OCI-LY7 (cell line): ENCODE measurements at regions of chr2 and their contacts with region 1.

Region 1: DNA sequence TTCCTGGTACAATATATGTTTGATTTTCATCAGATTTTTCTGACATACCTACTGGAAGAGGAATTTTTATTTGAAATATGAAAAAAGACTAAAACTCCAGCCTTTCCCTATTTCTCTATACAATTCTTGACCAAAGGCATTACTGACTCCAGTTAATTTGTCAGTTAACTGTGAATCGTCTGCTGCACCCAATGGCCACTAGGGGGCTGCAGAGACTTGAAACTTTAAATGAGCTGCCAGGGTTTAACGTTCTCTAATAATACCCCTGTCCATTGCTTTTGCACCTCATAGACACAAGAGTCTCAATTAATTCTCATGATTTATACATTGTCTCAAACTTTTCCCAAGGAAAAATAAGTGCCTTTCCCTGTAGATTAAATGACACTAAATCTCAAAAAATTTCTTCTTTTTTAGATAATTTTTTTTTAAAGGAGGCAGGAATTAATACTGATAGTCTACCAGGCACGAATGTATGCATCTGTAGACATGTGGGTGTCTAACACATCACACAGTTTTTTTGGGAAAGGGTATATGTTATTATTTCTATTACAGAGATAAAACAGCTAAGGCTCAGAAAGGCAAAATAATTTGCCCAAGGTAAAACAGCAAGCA is 1.8 kb upstream of the ALK start:
- DNase-seq: peak; percentile 71
- H3K4me3 ChIP-seq: no peak overlapping the region
- H3K27ac ChIP-seq: no peak overlapping the region
- H3K4me1 ChIP-seq: no peaks in the 10 kb centered on the region
- CTCF ChIP-seq: peak; percentile 97

Region 2: DNA sequence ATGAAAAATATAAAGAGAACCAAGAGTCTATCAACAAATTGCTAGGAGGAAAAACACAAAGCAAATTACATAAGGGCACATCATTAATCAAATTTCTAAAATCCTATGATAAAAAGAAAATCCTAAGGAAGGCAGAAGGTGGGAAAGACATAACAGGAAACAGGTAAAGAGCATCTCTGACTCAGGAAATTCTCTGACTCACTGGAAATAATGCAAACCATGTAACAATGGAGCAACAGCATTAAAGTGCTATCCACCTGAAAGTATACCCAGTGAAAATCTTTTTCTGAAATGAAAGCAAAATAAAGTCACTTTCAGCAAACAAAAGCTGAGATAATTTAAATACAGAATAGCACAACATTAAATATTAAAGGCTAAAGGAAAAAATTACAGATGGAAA is 12.8 kb before region 1 on chr2:
- CTCF ChIA-PET with region 1: no interaction called
- POLR2A ChIA-PET with region 1: no interaction called
- intact Hi-C with region 1: no loop called
- DNase-seq: no peak
- H3K4me3 ChIP-seq: no peak overlapping the region
- H3K27ac ChIP-seq: no peak overlapping the region
- H3K4me1 ChIP-seq: no peaks in the 10 kb centered on the region
- CTCF ChIP-seq: no peak

Region 3: GRCh38 chr2:30026087-30027055 is 103.2 kb after region 1 on chr2:
- CTCF ChIA-PET with region 1: no interaction called
- POLR2A ChIA-PET with region 1: no interaction called
- intact Hi-C with region 1: loop called (anchors 2 kb)
- DNase-seq: peak; percentile 20
- H3K4me3 ChIP-seq: no peak overlapping the region
- H3K27ac ChIP-seq: no peak overlapping the region
- H3K4me1 ChIP-seq: peaks cover 12% of the 10 kb centered on the region
- CTCF ChIP-seq: peak; percentile 76

Region 4: GRCh38 chr2:30072250-30072842 is 149.1 kb after region 1 on chr2:
- CTCF ChIA-PET with region 1: no interaction called
- POLR2A ChIA-PET with region 1: no interaction called
- intact Hi-C with region 1: loop called (anchors 1 kb)
- DNase-seq: peak; percentile 70
- H3K4me3 ChIP-seq: no peak overlapping the region
- H3K27ac ChIP-seq: no peak overlapping the region
- H3K4me1 ChIP-seq: no peaks in the 10 kb centered on the region
- CTCF ChIP-seq: peak; percentile 82

Region 5: GRCh38 chr2:30115141-30115980 is 192.1 kb after region 1 on chr2:
- CTCF ChIA-PET with region 1: no interaction called
- POLR2A ChIA-PET with region 1: no interaction called
- intact Hi-C with region 1: loop called (anchors 1 kb)
- DNase-seq: peak; percentile 79
- H3K4me3 ChIP-seq: no peak overlapping the region
- H3K27ac ChIP-seq: no peak overlapping the region
- H3K4me1 ChIP-seq: peaks cover 10% of the 10 kb centered on the region
- CTCF ChIP-seq: peak; percentile 97

Region 6: GRCh38 chr2:30197564-30198192 is 274.5 kb after region 1 on chr2:
- CTCF ChIA-PET with region 1: no interaction called
- POLR2A ChIA-PET with region 1: no interaction called
- intact Hi-C with region 1: no loop called
- DNase-seq: no peak
- H3K4me3 ChIP-seq: no peak overlapping the region
- H3K27ac ChIP-seq: no peak overlapping the region
- H3K4me1 ChIP-seq: no peaks in the 10 kb centered on the region
- CTCF ChIP-seq: no peak